ENCODE measurements at regions of chr2 and their contacts with region 1.

Region 1: GRCh38 chr2:172806493-172806892 is 70.8 kb downstream of the RAPGEF4 start:
- DNase-seq: peak in 2 of 4 donors; percentile 10 to 33
- ATAC-seq: peak; percentile 81
- H3K4me3 ChIP-seq: no peak overlapping the region
- H3K27ac ChIP-seq: no peak overlapping the region
- H3K4me1 ChIP-seq: no peaks in the 10 kb centered on the region
- H3K27me3 ChIP-seq: no peaks in the 10 kb centered on the region
- CTCF ChIP-seq: peak; percentile 73 to 93 (median 86)
- POLR2A ChIP-seq: no peak

Region 2: DNA sequence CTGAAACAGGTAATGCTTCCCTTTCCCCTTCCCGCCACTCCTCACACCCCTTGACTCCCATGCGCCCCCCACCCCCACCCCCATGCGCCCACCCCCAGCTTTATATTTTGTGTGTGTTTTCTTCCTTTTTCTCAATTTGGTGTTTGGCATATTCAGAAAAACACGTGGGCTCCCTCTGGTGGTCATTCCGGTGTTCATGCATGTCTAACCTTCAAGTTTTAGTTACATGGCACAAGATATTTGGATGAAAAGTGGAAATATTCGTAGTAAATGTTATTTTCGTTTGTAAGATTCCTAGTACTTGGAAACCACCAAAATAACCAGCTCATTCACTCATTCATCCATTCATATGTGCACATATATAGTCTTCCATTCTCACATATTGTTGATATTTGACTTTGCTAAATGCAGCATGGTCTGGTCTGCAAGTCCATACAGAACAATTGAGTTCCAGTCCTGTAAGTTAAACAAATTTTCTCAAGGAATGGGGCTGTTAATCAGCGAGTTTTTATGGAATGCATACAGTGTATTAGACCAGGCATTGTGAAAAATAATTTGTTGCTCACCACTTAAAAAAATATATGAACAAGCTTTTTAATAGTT is 125.5 kb after region 1 on chr2:
- intact Hi-C with region 1: loop called (anchors 5 kb)
- DNase-seq: peak; percentile 72 to 82 (median 78)
- ATAC-seq: no peak
- H3K4me3 ChIP-seq: no peak overlapping the region
- H3K27ac ChIP-seq: peak overlapping the region in 1 of 4 donors; percentile 22
- H3K4me1 ChIP-seq: peaks cover 33% of the 10 kb centered on the region
- H3K27me3 ChIP-seq: no peaks in the 10 kb centered on the region
- CTCF ChIP-seq: peak; percentile 28 to 80 (median 71)
- POLR2A ChIP-seq: no peak

Measured in body of pancreas (tissue), 4 donors.